Panc1 (cell line): ENCODE measurements at regions of chr11 and their contacts with region 1.

Region 1: DNA sequence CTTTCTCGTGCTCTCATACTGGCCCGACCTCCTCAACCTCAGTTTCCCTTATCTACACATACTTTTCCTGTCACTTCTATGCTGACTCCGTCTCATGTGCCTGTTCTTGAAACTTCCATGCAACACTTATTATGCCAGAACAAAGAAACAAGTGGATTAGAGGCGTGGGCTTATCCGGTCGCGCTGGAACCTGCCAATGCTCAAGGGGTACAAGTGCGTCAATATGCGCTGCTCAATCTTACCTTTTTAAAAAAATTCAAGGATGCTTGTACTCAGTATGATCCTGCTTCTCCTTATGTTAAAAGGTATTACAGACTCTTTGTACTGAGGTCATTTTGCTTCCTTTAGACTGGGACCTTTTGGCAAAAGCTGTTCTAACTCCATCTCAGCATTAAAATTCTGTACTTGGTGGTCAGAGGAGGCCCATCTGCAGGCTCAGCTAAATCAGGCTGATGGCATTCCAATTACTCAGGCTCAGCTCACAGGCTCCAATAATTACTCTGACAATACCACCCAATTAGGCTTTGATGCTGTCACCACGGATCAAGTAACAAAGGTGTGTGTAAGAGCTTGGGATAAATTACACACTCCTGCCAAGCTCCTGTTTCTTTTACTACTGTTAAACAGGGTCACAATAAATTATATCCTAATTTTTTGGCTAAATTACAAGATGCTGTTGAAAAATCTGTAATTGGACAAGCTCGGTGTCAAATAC is 26.3 kb upstream of the ALDH3B2 start:
- DNase-seq: no peak
- ATAC-seq: no peak
- H3K4me3 ChIP-seq: no peak overlapping the region
- H3K27ac ChIP-seq: no peak overlapping the region
- H3K4me1 ChIP-seq: peaks cover 2% of the 10 kb centered on the region
- H3K27me3 ChIP-seq: peaks cover 2% of the 10 kb centered on the region; the same call in 1 of the 2 replicates
- CTCF ChIP-seq: no peak

Region 2: DNA sequence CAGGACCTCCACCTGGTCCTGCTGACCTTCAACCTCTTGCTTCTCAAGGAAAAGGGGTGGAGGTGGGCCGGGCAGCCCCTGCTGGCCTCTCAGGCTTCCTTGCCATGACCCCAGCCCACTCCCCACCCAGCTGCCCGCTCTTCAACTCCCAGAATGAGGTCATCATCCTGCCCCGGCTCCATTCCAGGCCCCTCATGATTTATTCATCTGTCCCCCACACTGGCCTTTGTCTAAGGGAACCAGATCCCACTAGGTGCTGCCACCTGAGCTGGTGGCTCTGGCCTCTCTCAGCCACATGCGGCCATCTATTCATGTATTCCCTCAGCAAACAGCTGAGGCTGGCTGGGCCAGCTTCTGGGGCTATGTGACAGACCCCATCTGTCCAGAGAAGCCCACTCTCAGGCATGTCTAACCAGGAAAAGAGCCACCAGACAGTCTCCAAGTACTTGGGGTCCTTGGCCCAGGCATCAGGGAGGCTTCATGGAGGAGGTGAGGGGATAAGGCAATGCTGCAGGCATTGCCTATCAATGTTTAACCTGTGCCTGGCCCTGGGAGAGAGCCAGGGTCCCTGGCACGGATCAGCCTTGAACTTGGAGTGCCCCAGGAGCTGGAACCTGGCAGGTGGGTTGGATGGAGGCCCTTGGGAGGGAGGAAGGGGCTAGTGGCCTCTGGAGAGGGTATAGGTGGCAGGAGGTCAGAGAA is 175.3 kb before region 1 on chr11:
- CTCF ChIA-PET with region 1: no interaction called
- POLR2A ChIA-PET with region 1: interaction called, 10 read pairs
- in situ Hi-C with region 1: no loop called
- intact Hi-C with region 1: no loop called
- DNase-seq: no peak
- ATAC-seq: no peak
- H3K4me3 ChIP-seq: no peak overlapping the region
- H3K27ac ChIP-seq: no peak overlapping the region
- H3K4me1 ChIP-seq: peaks cover 3% of the 10 kb centered on the region; the same call in 1 of the 2 replicates
- H3K27me3 ChIP-seq: no peaks in the 10 kb centered on the region
- CTCF ChIP-seq: no peak

Region 3: GRCh38 chr11:67640021-67640757 is 60.5 kb before region 1 on chr11:
- CTCF ChIA-PET with region 1: no interaction called
- POLR2A ChIA-PET with region 1: no interaction called
- in situ Hi-C with region 1: no loop called
- intact Hi-C with region 1: loop called (anchors 10 kb)
- DNase-seq: no peak
- ATAC-seq: peak; percentile 90
- H3K4me3 ChIP-seq: no peak overlapping the region
- H3K27ac ChIP-seq: no peak overlapping the region
- H3K4me1 ChIP-seq: no peaks in the 10 kb centered on the region
- H3K27me3 ChIP-seq: no peaks in the 10 kb centered on the region
- CTCF ChIP-seq: peak; percentile 96

Region 4: GRCh38 chr11:67685641-67686495 is 14.8 kb before region 1 on chr11:
- CTCF ChIA-PET with region 1: no interaction called
- POLR2A ChIA-PET with region 1: no interaction called
- in situ Hi-C with region 1: no loop called
- intact Hi-C with region 1: no loop called
- DNase-seq: no peak
- ATAC-seq: no peak
- H3K4me3 ChIP-seq: no peak overlapping the region
- H3K27ac ChIP-seq: no peak overlapping the region
- H3K4me1 ChIP-seq: no peaks in the 10 kb centered on the region
- H3K27me3 ChIP-seq: peaks cover 8% of the 10 kb centered on the region; the same call in 1 of the 2 replicates
- CTCF ChIP-seq: no peak